Esophagus muscularis mucosa (tissue), 4 donors: ENCODE measurements at regions of chr17 and their contacts with region 1.

Region 1: GRCh38 chr17:7834962-7835813 is 1.2 kb downstream of the KDM6B start:
- DNase-seq: peak; percentile 99
- H3K4me3 ChIP-seq: peak overlapping the region; percentile 62 to 94 (median 80)
- H3K27ac ChIP-seq: peak overlapping the region; percentile 97 to 98 (median 98)
- H3K4me1 ChIP-seq: peaks cover 44 to 56% (median 53%) of the 10 kb centered on the region in 4 donors
- H3K27me3 ChIP-seq: no peaks in the 10 kb centered on the region
- CTCF ChIP-seq: peak; percentile 83 to 87 (median 85)
- EP300 ChIP-seq: no peak
- POLR2A ChIP-seq: peak; percentile 77

Region 2: GRCh38 chr17:7711051-7711755 is 124.0 kb before region 1 on chr17:
- intact Hi-C with region 1: no loop called
- DNase-seq: no peak
- H3K4me3 ChIP-seq: no peak overlapping the region
- H3K27ac ChIP-seq: no peak overlapping the region
- H3K4me1 ChIP-seq: peaks cover under 1 to 4% (median 1%) of the 10 kb centered on the region in 4 donors
- H3K27me3 ChIP-seq: peaks cover 0 to 100% (median 31%) of the 10 kb centered on the region in 4 donors
- CTCF ChIP-seq: no peak
- EP300 ChIP-seq: no peak
- POLR2A ChIP-seq: no peak

Region 3: DNA sequence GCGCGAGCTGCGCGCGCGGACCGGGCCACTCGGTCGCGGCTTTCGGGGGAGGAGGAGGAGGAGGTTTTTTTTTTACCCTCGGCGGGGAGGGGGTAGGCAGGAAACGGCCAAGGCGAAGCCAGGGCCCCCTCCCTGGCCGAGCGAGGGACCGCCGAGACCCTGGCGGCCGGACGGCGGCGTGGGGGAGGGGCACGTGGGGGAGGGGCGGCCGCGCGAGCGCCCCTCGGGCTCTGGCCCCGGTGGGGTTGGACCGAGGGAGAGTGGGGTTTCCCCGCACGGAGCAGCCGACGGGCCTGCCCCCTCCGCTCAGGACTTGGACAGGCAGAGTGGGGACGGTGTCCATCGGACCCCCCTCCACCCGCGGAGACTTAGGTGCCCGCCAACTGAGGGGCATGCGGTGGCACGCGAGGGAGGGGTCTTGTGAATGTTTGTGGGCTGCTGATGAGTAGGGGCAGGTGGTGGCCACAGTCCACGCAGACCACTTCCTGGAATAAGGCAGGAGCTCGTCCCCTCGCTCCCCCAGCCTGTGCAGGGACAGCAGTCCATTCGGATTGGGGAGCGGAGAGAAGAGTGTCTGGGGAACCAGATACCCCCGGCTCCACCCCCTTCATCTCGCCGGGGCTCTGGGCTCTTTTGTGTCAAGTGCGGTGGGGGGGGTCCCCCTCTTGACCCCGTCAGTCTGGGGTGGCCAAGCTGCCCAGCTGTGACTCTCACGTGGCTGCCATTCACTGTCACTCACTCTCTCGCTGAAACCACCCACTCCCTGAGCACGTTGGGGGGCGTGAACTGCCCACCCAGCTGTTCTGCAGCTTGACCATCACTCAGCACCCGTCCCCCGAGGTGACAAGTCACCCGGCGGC is 50.4 kb after region 1 on chr17:
- intact Hi-C with region 1: loop called (anchors 2 kb)
- DNase-seq: no peak
- H3K4me3 ChIP-seq: peak overlapping the region; percentile 84 to 93 (median 90)
- H3K27ac ChIP-seq: peak overlapping the region; percentile 90 to 96 (median 94)
- H3K4me1 ChIP-seq: peaks cover 47 to 86% (median 81%) of the 10 kb centered on the region in 4 donors
- H3K27me3 ChIP-seq: no peaks in the 10 kb centered on the region
- CTCF ChIP-seq: no peak
- EP300 ChIP-seq: no peak
- POLR2A ChIP-seq: no peak